Aorta (tissue), 5 donors: ENCODE measurements at regions of chr1 and their contacts with region 1.

Region 1: DNA sequence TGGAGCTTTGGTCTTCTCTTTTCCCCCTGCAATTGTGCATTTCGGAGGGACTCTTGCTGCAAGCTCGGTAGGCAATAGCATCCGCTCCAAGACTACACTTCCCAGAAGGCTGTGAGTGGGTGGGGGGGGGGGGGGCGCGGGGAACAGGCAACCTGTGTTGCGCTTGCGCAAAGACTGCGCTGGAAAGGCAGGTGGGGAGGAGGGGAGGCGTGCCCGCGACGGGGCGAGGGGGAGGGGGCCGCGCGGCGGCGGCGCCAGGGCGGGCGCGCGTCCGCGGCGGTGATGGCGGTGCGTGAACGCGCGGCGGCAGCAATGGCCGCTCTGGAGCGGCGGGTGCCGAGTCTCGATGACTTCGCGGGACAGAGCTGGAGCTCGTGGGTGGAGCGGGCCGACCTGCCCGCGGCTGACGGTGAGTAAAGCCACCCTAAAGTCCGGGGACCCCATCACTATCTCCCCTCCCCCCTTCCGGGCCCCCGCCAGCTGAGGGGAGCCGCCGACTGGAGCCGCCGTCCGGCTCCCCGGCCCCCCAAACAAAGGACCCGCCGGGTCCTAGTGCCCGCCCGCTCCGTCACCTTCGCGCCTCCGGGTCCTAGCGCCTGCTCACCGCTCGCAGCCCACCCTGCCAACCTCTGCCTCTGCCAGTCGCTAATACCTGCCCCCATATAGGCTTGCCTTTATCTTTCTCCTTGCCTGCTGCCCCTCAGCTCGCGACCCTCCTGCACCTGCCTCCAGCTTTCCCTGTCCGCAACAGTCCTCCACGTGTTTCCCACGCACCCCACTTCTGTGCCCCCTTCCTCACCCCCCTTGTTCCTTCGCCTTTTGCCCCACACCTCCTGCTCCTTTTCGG is at the start of gene ATXN7L2:
- DNase-seq: peak; percentile 95 to 97
- ATAC-seq: peak; percentile 96
- H3K4me3 ChIP-seq: peak within 1 kb of the TSS; percentile 62 to 71
- H3K27ac ChIP-seq: peak within 1 kb of the TSS in 1 of 2 donors; percentile 19
- H3K4me1 ChIP-seq: no peaks in the 10 kb centered on the region
- H3K27me3 ChIP-seq: no peaks in the 10 kb centered on the region
- total RNA-seq, gene ATXN7L2: 3.8 to 4.2 TPM

Region 2: DNA sequence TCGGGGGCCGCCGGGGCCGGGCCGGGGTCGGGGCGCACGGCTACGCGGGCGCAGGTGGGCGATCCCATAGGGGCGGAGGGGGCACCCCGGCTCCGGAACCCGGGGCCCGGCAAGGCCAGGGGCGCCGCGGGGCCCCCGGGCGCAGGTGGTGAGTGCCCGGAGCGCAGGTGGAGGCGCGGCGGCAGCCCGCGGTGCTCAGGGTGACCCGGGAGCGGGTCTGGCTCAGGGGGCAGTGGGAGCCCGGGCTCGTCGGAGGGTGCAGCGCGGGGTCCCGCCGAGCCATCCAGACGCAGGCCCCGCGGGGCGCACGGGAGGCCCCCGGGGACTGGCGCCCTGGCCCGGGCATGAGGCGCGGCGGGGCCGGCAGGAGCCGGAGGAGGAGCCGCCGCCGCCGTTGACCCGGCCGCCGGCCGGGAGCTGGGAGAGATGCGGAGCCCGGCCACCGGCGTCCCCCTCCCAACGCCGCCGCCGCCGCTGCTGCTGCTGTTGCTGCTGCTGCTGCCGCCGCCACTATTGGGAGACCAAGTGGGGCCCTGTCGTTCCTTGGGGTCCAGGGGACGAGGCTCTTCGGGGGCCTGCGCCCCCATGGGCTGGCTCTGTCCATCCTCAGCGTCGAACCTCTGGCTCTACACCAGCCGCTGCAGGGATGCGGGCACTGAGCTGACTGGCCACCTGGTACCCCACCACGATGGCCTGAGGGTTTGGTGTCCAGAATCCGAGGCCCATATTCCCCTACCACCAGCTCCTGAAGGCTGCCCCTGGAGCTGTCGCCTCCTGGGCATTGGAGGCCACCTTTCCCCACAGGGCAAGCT is 234.0 kb before region 1 on chr1:
- intact Hi-C with region 1: loop called in 1 of 2 experiments (anchors 5 kb)
- DNase-seq: peak; percentile 36 to 73
- ATAC-seq: no peak
- H3K4me3 ChIP-seq: peak overlapping the region; percentile 58 to 66
- H3K27ac ChIP-seq: no peak overlapping the region
- H3K4me1 ChIP-seq: peaks cover 0 to 4% of the 10 kb centered on the region in 2 donors
- H3K27me3 ChIP-seq: no peaks in the 10 kb centered on the region

Region 3: DNA sequence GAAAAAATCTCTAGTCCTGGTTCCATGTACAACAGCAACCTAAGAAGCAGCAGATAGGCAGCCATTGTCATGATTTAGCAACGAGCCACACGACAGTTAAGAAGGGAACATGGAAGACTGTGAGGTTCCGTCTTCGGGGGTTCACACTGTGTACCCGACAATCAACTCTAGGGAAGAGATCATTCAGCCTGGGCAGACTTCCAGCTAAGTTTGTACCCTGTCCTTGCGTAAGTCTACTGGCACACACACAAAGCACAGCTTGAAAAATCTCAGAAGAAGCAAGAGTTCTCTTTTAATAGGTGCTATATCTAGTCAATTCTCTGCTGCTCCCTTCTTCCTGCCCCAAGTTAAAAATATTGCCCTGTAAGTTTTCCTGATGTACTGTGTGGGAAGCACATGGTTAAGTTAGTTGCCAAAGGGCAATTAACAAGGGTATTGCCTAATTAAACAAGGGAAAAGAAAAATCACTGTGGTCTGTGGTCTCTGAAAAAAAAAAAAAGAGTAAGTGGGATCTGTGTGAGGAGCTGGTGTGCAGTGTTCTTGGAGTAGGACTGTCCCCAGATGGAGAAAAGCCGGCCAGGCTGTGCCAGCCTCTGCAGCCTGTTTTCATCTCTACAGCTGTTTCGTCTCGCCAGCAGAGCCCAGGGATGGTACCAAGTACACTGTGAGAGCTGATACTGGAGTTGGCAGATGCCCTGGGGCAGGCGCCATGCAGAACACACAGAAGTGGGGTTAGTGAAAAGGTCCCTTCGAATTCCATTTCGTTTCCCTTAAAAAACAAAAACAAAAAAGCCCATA is 170.7 kb before region 1 on chr1:
- intact Hi-C with region 1: no loop called
- DNase-seq: no peak
- ATAC-seq: no peak
- H3K4me3 ChIP-seq: no peak overlapping the region
- H3K27ac ChIP-seq: no peak overlapping the region
- H3K4me1 ChIP-seq: no peaks in the 10 kb centered on the region
- H3K27me3 ChIP-seq: no peaks in the 10 kb centered on the region

Region 4: DNA sequence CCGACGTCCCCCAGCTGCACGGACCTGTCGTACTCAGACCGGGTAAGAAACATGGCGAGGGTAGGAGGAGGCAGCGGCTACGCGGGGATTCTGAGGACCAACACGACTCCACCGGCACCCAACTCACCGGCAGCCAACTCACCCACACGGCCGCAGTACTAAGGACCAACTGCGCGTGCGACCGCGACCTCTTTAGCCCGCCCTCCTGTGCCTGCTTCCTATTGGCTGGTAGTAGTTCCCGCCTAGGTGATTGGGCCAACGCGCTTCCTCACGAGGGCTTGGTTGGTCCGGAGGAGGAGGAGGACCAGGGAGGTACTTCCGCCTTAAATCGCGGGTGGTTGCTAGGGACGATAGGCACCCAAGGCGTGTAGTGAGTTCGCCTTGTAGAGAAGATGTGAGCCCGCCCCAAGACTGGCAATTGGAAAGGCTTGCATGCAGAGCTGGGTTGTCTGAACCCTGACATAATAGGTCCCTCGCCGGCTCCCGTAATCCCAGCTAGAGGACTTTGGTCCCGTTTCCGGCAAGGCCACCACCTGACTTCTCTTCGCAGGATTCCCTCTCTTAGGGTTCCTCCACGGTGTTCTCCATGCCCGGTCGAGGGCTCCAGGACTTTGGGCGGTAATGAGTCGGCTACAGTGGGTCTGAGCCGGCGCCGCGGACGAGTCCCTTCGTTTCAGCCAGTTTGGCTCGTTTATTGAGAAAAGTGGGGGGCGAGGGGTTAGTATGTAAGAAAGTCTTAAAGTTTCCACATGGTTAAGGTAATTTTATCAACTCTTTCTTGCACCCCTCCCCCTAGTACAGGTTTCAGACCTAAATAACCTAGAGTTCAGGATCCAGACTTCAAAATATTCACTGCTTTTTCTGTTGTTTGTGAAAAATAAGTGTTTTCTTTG is 57.4 kb before region 1 on chr1 and contains the start of gene PSMA5:
- intact Hi-C with region 1: loop called (anchors 5 kb)
- DNase-seq: peak; percentile 97 to 99
- ATAC-seq: peak; percentile 99
- H3K4me3 ChIP-seq: peak within 1 kb of the TSS; percentile 72 to 93
- H3K27ac ChIP-seq: peak within 1 kb of the TSS; percentile 46 to 58
- H3K4me1 ChIP-seq: no peaks in the 10 kb centered on the region
- H3K27me3 ChIP-seq: no peaks in the 10 kb centered on the region
- total RNA-seq, gene PSMA5: 37.4 to 49.9 TPM

Region 5: GRCh38 chr1:109677459-109677858 is 193.6 kb after region 1 on chr1:
- intact Hi-C with region 1: no loop called
- DNase-seq: no peak
- ATAC-seq: no peak
- H3K4me3 ChIP-seq: no peak overlapping the region
- H3K27ac ChIP-seq: no peak overlapping the region
- H3K4me1 ChIP-seq: no peaks in the 10 kb centered on the region
- H3K27me3 ChIP-seq: no peaks in the 10 kb centered on the region